ENCODE measurements at regions of chr1 and their contacts with region 1.

Region 1: GRCh38 chr1:150363426-150364230 is at the start of gene RPRD2:
- DNase-seq: peak; percentile 100
- H3K4me3 Mint-ChIP-seq: peak within 1 kb of the TSS; percentile 92
- H3K27ac Mint-ChIP-seq: peak within 1 kb of the TSS; percentile 97
- H3K4me1 Mint-ChIP-seq: peaks cover 19% of the 10 kb centered on the region
- H3K27me3 Mint-ChIP-seq: no peaks in the 10 kb centered on the region
- CTCF ChIP-seq: no peak
- total RNA-seq, gene RPRD2: 35.2 and 37.4 TPM in 2 replicates

Region 2: DNA sequence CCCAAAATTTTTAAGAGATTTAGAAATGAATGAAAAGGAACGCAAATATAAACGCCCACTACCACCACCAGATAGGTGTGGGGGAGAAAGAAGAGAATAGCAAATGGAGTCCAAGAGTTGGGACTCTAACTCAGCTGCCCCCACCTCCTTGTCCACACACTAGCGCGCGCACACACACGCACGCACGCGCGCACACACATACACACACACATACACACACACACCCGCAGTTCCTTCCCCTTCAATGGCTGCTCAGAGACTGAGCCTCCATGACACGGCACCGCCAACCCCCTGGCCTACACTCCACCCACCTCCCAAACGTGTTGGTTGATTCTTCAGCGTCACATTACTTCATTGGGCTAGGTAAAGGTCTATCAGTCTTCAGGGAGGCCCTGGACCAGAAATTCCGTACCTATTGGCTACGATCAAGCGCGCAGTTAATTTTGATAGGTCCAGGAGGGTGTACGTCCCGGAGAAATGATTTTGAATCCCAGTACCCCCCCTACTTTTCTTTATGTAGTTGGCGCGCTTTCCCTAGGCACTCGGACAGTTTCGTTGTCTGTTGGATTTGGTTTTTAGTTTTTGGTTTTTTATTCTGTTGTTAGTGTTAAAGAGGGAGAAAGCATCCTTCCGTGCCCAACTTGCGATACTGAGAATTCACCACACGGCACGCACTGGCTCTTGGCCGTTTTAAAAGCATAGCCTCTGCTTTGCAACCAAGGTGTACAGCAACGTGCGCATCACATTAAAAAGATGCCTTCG is 127.6 kb before region 1 on chr1 and contains the start of gene ANP32E:
- CTCF ChIA-PET with region 1: interaction called, 3 read pairs
- POLR2A ChIA-PET with region 1: interaction called, 21 read pairs
- intact Hi-C with region 1: no loop called
- DNase-seq: peak; percentile 100
- H3K4me3 Mint-ChIP-seq: no peak within 1 kb of the TSS
- H3K27ac Mint-ChIP-seq: no peak within 1 kb of the TSS
- H3K4me1 Mint-ChIP-seq: peaks cover 11% of the 10 kb centered on the region
- H3K27me3 Mint-ChIP-seq: no peaks in the 10 kb centered on the region
- CTCF ChIP-seq: no peak
- total RNA-seq, gene ANP32E: 56.5 and 67.3 TPM in 2 replicates

Region 3: GRCh38 chr1:150281837-150282653 is 81.6 kb before region 1 on chr1 and contains the start of gene CIART:
- CTCF ChIA-PET with region 1: no interaction called
- POLR2A ChIA-PET with region 1: interaction called, 27 read pairs
- intact Hi-C with region 1: no loop called
- DNase-seq: peak; percentile 99
- H3K4me3 Mint-ChIP-seq: peak within 1 kb of the TSS; percentile 83
- H3K27ac Mint-ChIP-seq: peak within 1 kb of the TSS; percentile 94
- H3K4me1 Mint-ChIP-seq: peaks cover 43% of the 10 kb centered on the region
- H3K27me3 Mint-ChIP-seq: no peaks in the 10 kb centered on the region
- CTCF ChIP-seq: no peak
- total RNA-seq, gene CIART: 5.0 and 5.2 TPM in 2 replicates

Region 4: GRCh38 chr1:150346316-150346715 is 17.3 kb before region 1 on chr1:
- CTCF ChIA-PET with region 1: interaction called, 5 read pairs
- POLR2A ChIA-PET with region 1: interaction called, 14 read pairs
- intact Hi-C with region 1: no loop called
- DNase-seq: no peak
- H3K4me3 Mint-ChIP-seq: no peak overlapping the region
- H3K27ac Mint-ChIP-seq: no peak overlapping the region
- H3K4me1 Mint-ChIP-seq: no peaks in the 10 kb centered on the region
- H3K27me3 Mint-ChIP-seq: no peaks in the 10 kb centered on the region
- CTCF ChIP-seq: no peak

Region 5: GRCh38 chr1:150429805-150430204 is 66.2 kb after region 1 on chr1:
- CTCF ChIA-PET with region 1: interaction called, 3 read pairs
- POLR2A ChIA-PET with region 1: interaction called, 17 read pairs
- intact Hi-C with region 1: loop called (anchors 1 kb)
- DNase-seq: peak; percentile 40
- H3K4me3 Mint-ChIP-seq: no peak overlapping the region
- H3K27ac Mint-ChIP-seq: no peak overlapping the region
- H3K4me1 Mint-ChIP-seq: peaks cover 5% of the 10 kb centered on the region
- H3K27me3 Mint-ChIP-seq: no peaks in the 10 kb centered on the region
- CTCF ChIP-seq: peak; percentile 29

Region 6: GRCh38 chr1:150548632-150549495 is 185.2 kb after region 1 on chr1 and contains the start of gene ADAMTSL4:
- CTCF ChIA-PET with region 1: no interaction called
- POLR2A ChIA-PET with region 1: interaction called, 12 read pairs
- intact Hi-C with region 1: no loop called
- DNase-seq: peak; percentile 80
- H3K4me3 Mint-ChIP-seq: peak within 1 kb of the TSS; percentile 81
- H3K27ac Mint-ChIP-seq: peak within 1 kb of the TSS; percentile 78
- H3K4me1 Mint-ChIP-seq: peaks cover 28% of the 10 kb centered on the region
- H3K27me3 Mint-ChIP-seq: no peaks in the 10 kb centered on the region
- CTCF ChIP-seq: peak; percentile 15
- total RNA-seq, gene ADAMTSL4: 9.6 and 13.3 TPM in 2 replicates

Region 7: GRCh38 chr1:151008190-151008860 is 644.7 kb after region 1 on chr1 and contains the start of gene PRUNE1:
- CTCF ChIA-PET with region 1: no interaction called
- POLR2A ChIA-PET with region 1: interaction called, 19 read pairs
- intact Hi-C with region 1: no loop called
- DNase-seq: peak; percentile 97
- H3K4me3 Mint-ChIP-seq: peak within 1 kb of the TSS; percentile 94
- H3K27ac Mint-ChIP-seq: peak within 1 kb of the TSS; percentile 99
- H3K4me1 Mint-ChIP-seq: peaks cover 35% of the 10 kb centered on the region
- H3K27me3 Mint-ChIP-seq: no peaks in the 10 kb centered on the region
- CTCF ChIP-seq: no peak
- total RNA-seq, gene PRUNE1: 17.6 and 24.1 TPM in 2 replicates

Measured in MCF 10A (cell line).